ENCODE measurements at regions of chr20 and their contacts with region 1.

Region 1: GRCh38 chr20:49132995-49133478 is 55.1 kb downstream of the STAU1 start:
- DNase-seq: no peak
- H3K4me3 Mint-ChIP-seq: no peak overlapping the region
- H3K27ac Mint-ChIP-seq: no peak overlapping the region
- H3K4me1 Mint-ChIP-seq: peaks cover 7% of the 10 kb centered on the region
- H3K27me3 Mint-ChIP-seq: no peaks in the 10 kb centered on the region

Region 2: DNA sequence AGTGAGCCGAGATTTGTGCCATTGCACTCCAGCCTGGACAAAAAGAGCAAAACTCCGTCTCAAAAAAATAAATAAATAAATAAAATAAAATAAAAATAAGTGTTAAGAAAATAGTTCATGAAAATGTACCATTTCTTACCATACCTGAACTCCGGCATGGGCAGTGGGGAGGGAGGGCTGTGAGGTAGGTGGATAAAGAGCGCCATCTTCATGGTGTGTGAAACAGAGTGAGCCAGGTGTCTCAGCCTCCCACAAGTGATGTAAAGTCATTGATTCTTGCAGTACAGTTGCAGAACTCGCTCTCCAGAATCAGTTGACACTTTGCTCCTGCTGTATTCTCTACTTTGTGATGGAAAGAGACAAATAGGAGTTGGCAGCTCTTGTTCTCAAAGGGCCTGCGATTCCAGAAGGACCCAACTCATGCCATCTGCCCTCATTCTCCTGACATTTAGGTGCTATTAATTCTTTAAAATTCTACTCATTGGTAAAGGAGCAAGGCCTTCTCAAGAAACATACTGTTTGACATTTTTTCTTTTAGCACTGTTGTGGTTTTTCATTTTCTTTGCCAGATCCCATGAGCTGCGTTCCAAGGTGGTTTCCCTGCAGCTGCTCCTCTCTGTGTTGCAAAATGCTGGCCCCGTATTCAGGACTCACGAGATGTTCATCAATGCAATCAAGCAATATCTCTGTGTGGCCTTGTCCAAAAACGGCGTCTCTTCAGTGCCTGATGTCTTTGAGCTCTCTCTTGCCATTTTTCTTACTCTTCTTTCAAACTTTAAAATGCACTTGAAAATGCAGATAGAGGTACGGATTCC is 162.3 kb before region 1 on chr20:
- CTCF ChIA-PET with region 1: no interaction called
- POLR2A ChIA-PET with region 1: no interaction called
- DNase-seq: no peak
- H3K4me3 Mint-ChIP-seq: no peak overlapping the region
- H3K27ac Mint-ChIP-seq: no peak overlapping the region
- H3K4me1 Mint-ChIP-seq: no peaks in the 10 kb centered on the region
- H3K27me3 Mint-ChIP-seq: no peaks in the 10 kb centered on the region

Region 3: GRCh38 chr20:49100972-49101371 is 32.1 kb before region 1 on chr20:
- CTCF ChIA-PET with region 1: no interaction called
- POLR2A ChIA-PET with region 1: no interaction called
- DNase-seq: no peak
- H3K4me3 Mint-ChIP-seq: no peak overlapping the region
- H3K27ac Mint-ChIP-seq: peak overlapping the region; percentile 41
- H3K4me1 Mint-ChIP-seq: peaks cover 14% of the 10 kb centered on the region
- H3K27me3 Mint-ChIP-seq: no peaks in the 10 kb centered on the region

Region 4: GRCh38 chr20:49112596-49113274 is 20.3 kb before region 1 on chr20:
- CTCF ChIA-PET with region 1: no interaction called
- POLR2A ChIA-PET with region 1: no interaction called
- DNase-seq: no peak
- H3K4me3 Mint-ChIP-seq: no peak overlapping the region
- H3K27ac Mint-ChIP-seq: no peak overlapping the region
- H3K4me1 Mint-ChIP-seq: peaks cover 2% of the 10 kb centered on the region
- H3K27me3 Mint-ChIP-seq: no peaks in the 10 kb centered on the region

Region 5: DNA sequence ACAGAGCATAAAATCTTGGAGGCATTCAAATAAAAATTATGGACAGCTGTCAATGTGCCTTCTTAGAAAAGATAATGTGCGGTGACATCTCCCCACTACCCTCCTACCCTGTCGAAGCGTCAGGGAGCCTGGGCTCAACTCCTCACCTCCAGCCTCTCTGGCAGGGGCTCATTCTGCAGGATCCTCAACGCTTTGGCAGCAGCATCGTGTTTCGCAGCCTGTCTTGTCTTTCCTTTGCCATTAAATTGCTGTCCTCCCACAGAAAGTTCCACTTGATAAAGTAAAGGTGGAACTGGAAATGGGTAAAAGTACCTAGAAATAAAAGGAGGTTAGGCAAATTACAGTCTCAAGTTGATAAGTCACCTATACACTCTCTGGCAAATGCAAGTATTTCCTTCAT is 18.4 kb after region 1 on chr20:
- CTCF ChIA-PET with region 1: interaction called, 10 read pairs
- POLR2A ChIA-PET with region 1: interaction called, 3 read pairs
- DNase-seq: no peak
- H3K4me3 Mint-ChIP-seq: no peak overlapping the region
- H3K27ac Mint-ChIP-seq: no peak overlapping the region
- H3K4me1 Mint-ChIP-seq: peaks cover 15% of the 10 kb centered on the region
- H3K27me3 Mint-ChIP-seq: no peaks in the 10 kb centered on the region

Region 6: GRCh38 chr20:49179368-49180277 is 46.6 kb after region 1 on chr20:
- CTCF ChIA-PET with region 1: interaction called, 10 read pairs
- POLR2A ChIA-PET with region 1: interaction called, 3 read pairs
- DNase-seq: no peak
- H3K4me3 Mint-ChIP-seq: no peak overlapping the region
- H3K27ac Mint-ChIP-seq: no peak overlapping the region
- H3K4me1 Mint-ChIP-seq: peaks cover 43% of the 10 kb centered on the region
- H3K27me3 Mint-ChIP-seq: no peaks in the 10 kb centered on the region